A673 (cell line): ENCODE measurements at regions of chr11 and their contacts with region 1.

Region 1: DNA sequence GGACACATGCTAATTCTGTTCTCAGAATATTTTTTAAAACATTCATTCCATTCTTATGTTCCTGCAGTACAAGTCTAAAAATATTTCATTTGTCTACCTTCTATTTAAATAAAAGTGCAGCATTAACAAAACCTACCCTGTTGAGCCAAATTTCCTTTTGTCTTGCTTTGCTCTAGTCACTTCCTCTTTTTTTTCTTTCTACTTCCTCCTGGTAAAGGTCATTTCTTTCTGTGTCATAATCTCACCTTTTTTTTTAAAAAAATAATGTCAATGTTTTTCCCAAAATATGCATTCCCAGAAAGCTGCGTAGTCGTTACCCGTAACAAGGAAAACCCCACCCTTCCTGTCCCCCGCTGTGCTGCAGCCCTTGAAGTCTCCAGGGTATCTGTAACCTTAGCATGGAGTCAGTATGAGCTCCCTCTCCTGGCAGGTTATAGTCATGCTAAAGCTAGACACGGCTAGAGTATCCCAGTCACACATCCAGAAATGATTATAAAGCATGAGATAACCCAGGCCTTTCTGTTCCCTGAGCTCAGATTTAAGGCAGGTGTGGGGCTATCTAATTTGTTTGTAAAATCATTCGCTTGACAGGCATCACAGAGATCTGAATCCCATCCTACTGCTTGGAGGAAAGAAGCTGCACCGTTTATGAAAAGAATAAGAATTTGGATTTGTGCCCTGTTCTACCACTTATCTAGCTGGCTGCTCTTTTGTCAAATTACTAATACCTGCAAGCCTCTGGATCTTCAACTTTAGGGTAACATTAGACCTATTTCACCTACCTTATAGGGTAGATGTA is 51.1 kb upstream of the EED start:
- DNase-seq: peak; percentile 94
- H3K4me3 ChIP-seq: peak overlapping the region; percentile 25
- H3K27ac ChIP-seq: no peak overlapping the region
- H3K4me1 ChIP-seq: peaks cover 7% of the 10 kb centered on the region
- H3K27me3 ChIP-seq: no peaks in the 10 kb centered on the region
- CTCF ChIP-seq: peak; percentile 88

Region 2: DNA sequence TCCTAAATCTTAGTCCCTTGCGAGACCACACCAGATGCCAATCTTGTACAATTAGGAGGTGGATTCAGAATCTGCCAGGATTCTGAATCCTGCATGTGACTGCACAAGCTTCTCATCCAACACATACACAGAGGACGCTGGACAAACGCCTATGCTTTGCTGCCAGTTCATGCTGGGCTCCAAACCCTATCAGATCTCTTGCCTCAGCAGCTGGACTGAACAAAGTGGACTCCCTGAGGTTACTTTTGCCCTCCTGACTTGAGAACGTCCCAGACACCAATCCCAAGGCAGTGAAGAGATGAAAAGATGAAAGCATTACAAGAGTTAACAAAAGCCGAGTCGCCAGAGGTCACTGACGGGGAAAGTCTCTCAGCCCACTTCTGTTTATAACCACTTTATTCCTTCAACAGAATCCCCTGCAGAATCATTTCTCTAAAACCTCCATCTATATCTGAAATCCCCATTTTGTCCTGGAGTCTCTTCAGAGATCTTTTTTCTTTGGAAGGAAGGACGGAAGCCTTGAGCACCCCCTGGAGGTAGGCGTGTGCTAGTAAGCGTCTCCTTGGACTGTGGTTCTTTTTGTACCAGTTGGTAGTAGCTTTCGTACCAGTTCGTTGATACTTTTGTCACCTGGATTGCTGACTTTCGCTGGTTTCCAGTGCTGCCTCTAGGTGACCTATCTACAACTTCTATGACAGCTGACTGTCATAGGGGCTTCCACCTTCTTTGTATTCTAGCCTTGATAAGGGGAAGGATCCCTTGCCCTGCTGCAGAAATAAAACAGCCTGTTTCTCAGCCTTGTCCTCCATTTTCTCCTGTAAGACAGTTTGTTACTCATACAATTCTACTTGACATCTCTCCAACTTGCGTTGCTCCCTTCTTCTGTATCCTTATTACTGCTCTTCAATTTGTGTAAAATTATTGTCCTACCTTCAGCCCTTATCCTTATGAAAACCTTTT is 24.9 kb after region 1 on chr11:
- CTCF ChIA-PET with region 1: interaction called, 17 read pairs
- POLR2A ChIA-PET with region 1: no interaction called
- intact Hi-C with region 1: no loop called
- DNase-seq: peak; percentile 89
- H3K4me3 ChIP-seq: no peak overlapping the region
- H3K27ac ChIP-seq: no peak overlapping the region
- H3K4me1 ChIP-seq: peaks cover 10% of the 10 kb centered on the region
- H3K27me3 ChIP-seq: no peaks in the 10 kb centered on the region
- CTCF ChIP-seq: peak; percentile 97